Activated CD8-positive, alpha-beta T cell treated with anti-CD3 and anti-CD28 coated beads for 36 hours (primary cell): ENCODE measurements at regions of chr17 and their contacts with region 1.

Region 1: DNA sequence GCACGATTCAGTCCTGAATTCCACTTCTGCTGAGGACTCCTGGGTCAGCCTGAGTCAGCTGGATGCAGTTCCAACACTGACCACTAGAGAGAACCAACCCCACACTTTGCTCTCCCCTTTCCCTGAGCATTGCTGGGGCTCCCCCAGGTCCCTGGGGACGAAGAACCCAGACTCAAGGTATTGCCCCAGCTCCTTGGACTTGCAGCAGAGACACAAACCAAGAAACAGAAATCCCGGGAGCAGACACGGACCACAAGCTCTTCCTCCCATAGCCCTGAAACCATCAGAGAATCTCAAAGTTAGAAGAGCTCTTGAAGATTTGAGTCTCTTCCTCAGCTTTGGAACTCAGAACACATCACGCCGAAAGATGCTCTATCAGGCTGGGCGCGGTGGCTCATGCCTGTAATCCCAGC is 678 bp upstream of the GH1 start:
- DNase-seq: peak; percentile 80
- ATAC-seq: peak; percentile 99
- H3K4me3 Mint-ChIP-seq: no peak overlapping the region
- H3K27ac Mint-ChIP-seq: no peak overlapping the region
- H3K4me1 Mint-ChIP-seq: peaks cover 5% of the 10 kb centered on the region
- H3K27me3 Mint-ChIP-seq: no peaks in the 10 kb centered on the region
- CTCF ChIP-seq: peak; percentile 95

Region 2: DNA sequence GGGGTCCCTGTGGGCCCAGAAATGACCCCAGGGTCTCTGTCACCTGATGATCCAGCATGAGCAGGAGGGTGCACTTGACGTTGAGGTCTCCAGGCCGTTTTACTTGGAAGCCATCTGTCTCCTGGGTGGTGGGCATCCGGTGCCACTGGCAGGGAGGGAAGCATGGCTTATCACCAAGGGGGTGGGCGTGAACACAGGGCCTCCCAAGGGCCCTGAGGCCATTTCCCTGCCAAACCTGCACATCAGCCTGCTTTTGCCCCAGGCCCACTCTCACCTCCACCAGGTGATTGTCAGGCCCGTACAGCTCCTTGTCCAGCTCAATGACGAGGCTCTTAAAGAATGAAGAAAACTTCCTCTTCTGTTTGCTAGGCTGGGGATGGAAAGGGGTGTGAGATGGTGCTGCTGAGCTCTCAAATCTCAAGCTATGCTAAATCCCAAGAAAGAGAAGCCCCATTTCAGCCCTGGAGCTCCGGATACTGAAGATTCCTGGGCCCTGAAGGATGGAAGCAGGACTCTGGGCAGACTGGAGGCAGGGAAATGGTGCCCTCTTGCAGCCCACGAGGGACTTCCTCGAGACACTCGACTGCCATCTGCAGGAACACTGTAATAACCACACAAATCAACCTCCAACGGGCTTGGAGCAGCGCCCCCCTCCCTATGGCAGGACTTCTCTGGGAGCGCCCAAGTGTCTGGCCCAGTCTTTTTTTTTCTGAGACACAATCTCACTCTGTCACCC is 84.7 kb before region 1 on chr17:
- CTCF ChIA-PET with region 1: no interaction called
- POLR2A ChIA-PET with region 1: no interaction called
- intact Hi-C with region 1: no loop called
- DNase-seq: peak; percentile 61
- ATAC-seq: peak; percentile 83
- H3K4me3 Mint-ChIP-seq: no peak overlapping the region
- H3K27ac Mint-ChIP-seq: peak overlapping the region; percentile 69
- H3K4me1 Mint-ChIP-seq: peaks cover 47% of the 10 kb centered on the region
- H3K27me3 Mint-ChIP-seq: no peaks in the 10 kb centered on the region
- CTCF ChIP-seq: peak; percentile 58

Region 3: GRCh38 chr17:63904316-63904715 is 15.0 kb before region 1 on chr17:
- CTCF ChIA-PET with region 1: interaction called, 38 read pairs
- POLR2A ChIA-PET with region 1: no interaction called
- intact Hi-C with region 1: no loop called
- DNase-seq: no peak
- ATAC-seq: no peak
- H3K4me3 Mint-ChIP-seq: no peak overlapping the region
- H3K27ac Mint-ChIP-seq: no peak overlapping the region
- H3K4me1 Mint-ChIP-seq: peaks cover 8% of the 10 kb centered on the region
- H3K27me3 Mint-ChIP-seq: peaks cover 3% of the 10 kb centered on the region
- CTCF ChIP-seq: no peak

Region 4: DNA sequence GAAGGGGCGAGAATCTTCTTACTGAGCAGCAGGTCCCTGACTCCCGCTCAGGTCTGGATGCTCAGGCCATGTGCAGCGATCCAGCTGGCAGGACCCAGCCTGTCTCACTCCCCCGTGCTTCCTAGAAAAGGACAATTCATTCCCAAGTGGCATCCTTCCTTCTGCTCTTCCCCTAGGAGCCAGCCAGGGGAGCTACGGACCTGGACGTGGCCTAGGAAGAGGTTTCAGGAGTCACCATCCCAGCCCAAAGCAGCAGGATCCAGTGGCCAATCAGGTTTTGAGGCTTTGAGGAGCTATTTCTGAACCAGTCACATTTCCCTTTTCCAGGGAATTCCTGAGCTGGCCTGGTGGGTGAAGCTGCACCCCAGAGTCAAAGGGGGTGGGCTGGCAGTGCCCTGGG is 20.6 kb after region 1 on chr17:
- CTCF ChIA-PET with region 1: interaction called, 11 read pairs
- POLR2A ChIA-PET with region 1: no interaction called
- intact Hi-C with region 1: no loop called
- DNase-seq: no peak
- ATAC-seq: no peak
- H3K4me3 Mint-ChIP-seq: no peak overlapping the region
- H3K27ac Mint-ChIP-seq: no peak overlapping the region
- H3K4me1 Mint-ChIP-seq: no peaks in the 10 kb centered on the region
- H3K27me3 Mint-ChIP-seq: no peaks in the 10 kb centered on the region
- CTCF ChIP-seq: no peak

Region 5: DNA sequence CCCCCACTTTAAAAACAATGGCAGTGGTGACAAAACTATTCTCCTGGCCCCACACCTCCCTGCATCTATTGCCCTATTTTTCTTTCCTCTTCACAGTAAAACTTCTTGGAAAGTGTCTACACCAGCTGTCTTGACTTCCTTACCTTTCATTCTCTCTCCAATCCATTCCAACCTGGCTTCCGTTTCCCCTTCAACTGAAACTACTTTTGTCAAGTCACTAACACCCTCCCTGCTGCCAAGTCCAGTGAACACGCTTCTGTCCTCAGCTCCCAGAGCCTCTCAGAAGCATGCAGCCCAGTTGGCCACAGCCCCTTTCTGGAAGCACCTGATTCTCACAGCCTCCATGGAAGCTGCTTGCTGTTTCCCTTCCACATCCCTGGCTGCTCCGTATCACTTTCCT is 57.4 kb after region 1 on chr17:
- CTCF ChIA-PET with region 1: interaction called, 126 read pairs
- POLR2A ChIA-PET with region 1: no interaction called
- intact Hi-C with region 1: no loop called
- DNase-seq: no peak
- ATAC-seq: no peak
- H3K4me3 Mint-ChIP-seq: no peak overlapping the region
- H3K27ac Mint-ChIP-seq: no peak overlapping the region
- H3K4me1 Mint-ChIP-seq: peaks cover 16% of the 10 kb centered on the region
- H3K27me3 Mint-ChIP-seq: no peaks in the 10 kb centered on the region
- CTCF ChIP-seq: no peak

Region 6: GRCh38 chr17:63993368-63993985 is 74.2 kb after region 1 on chr17:
- CTCF ChIA-PET with region 1: interaction called, 126 read pairs
- POLR2A ChIA-PET with region 1: interaction called, 3 read pairs
- intact Hi-C with region 1: loop called (anchors 5 kb)
- DNase-seq: no peak
- ATAC-seq: no peak
- H3K4me3 Mint-ChIP-seq: no peak overlapping the region
- H3K27ac Mint-ChIP-seq: peak overlapping the region; percentile 37
- H3K4me1 Mint-ChIP-seq: peaks cover 38% of the 10 kb centered on the region
- H3K27me3 Mint-ChIP-seq: no peaks in the 10 kb centered on the region
- CTCF ChIP-seq: no peak